ENCODE measurements at regions of chr7 and their contacts with region 1.

Region 1: DNA sequence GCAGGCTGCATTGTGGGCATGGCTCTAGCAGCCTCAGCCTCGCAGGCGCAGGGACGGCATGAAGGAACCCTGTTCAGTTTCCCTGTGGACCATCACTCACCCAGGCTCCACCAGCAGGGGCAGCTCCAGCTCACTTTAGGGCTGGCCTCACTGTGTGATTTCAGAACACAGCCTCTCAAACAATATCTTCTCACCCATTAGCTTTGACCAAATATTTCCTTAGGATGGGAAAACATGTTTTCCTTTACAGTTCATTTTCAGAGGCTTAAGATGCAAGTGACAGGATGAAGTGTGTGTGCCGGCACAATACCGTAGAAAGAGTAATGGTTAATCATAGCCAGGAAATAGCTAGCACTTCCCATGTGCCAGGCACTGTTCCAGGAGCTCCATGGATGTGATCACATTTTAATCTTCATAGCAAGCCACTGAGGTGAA is 58.2 kb downstream of the LANCL2 start:
- DNase-seq: no peak
- H3K4me3 ChIP-seq: no peak overlapping the region
- H3K27ac ChIP-seq: no peak overlapping the region
- H3K4me1 ChIP-seq: peaks cover 0 to 2% of the 10 kb centered on the region in 2 experiments; a peak in 1 of 4 replicates
- H3K27me3 ChIP-seq: no peaks in the 10 kb centered on the region
- CTCF ChIP-seq: peak; percentile 26
- EP300 ChIP-seq: no peak
- RAD21 ChIP-seq: no peak

Region 2: GRCh38 chr7:55593515-55594318 is 170.4 kb after region 1 on chr7:
- CTCF ChIA-PET with region 1: interaction called, 11 read pairs
- POLR2A ChIA-PET with region 1: no interaction called
- DNase-seq: peak; percentile 80
- H3K4me3 ChIP-seq: no peak overlapping the region; a peak in 1 of 4 replicates
- H3K27ac ChIP-seq: no peak overlapping the region
- H3K4me1 ChIP-seq: no peaks in the 10 kb centered on the region; a peak in 1 of 4 replicates
- H3K27me3 ChIP-seq: peaks cover 7% of the 10 kb centered on the region; the same call in 1 of the 2 replicates
- CTCF ChIP-seq: peak; percentile 97
- EP300 ChIP-seq: no peak
- RAD21 ChIP-seq: peak; percentile 75

Measured in SK-N-SH (cell line).